Posterior vena cava (tissue), 2 donors: ENCODE measurements at regions of chr6 and their contacts with region 1.

Region 1: GRCh38 chr6:2988426-2989331 is 11.0 kb upstream of the NQO2 start:
- DNase-seq: peak; percentile 98

Region 2: GRCh38 chr6:1787894-1788293 is 1200.8 kb before region 1 on chr6:
- intact Hi-C with region 1: no loop called
- DNase-seq: no peak

Region 3: GRCh38 chr6:2952557-2953095 is 36.1 kb before region 1 on chr6:
- intact Hi-C with region 1: loop called (anchors 2 to 5 kb)
- DNase-seq: peak; percentile 93